WTC11 (cell line): ENCODE measurements at regions of chr22 and their contacts with region 1.

Region 1: DNA sequence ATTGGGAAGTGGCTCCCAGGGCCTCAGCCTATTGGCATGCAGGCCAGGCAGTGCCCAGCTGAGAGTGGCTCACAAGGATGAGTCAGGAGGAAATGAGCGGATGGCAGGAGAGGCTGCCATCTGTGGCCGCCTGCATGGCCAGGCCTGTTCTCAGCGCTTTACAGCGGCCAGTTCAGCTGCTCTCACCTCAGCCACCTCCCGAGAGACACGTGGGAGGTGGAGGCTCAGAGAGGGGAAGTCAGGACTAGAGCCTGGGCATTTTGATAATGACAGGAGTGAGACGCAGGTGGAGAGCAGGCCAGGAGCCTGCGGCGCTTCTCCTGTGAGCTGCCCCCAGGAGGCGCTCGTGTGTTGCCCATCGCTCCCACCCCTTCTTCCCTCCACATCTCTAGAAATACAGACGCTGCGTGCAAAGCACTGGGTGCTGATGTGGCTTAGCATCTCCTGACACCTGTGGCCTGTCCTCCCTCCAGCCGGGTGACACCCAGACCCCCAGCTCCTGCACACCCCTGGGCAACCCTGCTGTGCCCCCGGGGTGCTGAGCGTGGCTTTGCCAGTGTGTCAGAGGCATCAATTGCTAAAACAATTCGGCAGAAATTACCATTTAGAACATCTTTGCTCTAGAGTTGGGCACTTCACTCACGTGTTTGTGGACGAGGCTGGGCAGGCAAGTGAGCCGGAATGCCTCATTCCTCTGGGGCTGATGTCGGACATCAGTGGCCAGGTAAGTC is 21.4 kb upstream of the PANX2 start:
- DNase-seq: peak; percentile 74
- ATAC-seq: peak; percentile 89
- H3K4me3 Mint-ChIP-seq: no peak overlapping the region
- H3K27ac Mint-ChIP-seq: no peak overlapping the region
- H3K4me1 Mint-ChIP-seq: 0 out of 2 replicates have a peak, but pooled peaks cover 2% of the 10 kb centered on the region
- H3K27me3 Mint-ChIP-seq: no peaks in the 10 kb centered on the region
- CTCF ChIP-seq: peak; percentile 88

Region 2: DNA sequence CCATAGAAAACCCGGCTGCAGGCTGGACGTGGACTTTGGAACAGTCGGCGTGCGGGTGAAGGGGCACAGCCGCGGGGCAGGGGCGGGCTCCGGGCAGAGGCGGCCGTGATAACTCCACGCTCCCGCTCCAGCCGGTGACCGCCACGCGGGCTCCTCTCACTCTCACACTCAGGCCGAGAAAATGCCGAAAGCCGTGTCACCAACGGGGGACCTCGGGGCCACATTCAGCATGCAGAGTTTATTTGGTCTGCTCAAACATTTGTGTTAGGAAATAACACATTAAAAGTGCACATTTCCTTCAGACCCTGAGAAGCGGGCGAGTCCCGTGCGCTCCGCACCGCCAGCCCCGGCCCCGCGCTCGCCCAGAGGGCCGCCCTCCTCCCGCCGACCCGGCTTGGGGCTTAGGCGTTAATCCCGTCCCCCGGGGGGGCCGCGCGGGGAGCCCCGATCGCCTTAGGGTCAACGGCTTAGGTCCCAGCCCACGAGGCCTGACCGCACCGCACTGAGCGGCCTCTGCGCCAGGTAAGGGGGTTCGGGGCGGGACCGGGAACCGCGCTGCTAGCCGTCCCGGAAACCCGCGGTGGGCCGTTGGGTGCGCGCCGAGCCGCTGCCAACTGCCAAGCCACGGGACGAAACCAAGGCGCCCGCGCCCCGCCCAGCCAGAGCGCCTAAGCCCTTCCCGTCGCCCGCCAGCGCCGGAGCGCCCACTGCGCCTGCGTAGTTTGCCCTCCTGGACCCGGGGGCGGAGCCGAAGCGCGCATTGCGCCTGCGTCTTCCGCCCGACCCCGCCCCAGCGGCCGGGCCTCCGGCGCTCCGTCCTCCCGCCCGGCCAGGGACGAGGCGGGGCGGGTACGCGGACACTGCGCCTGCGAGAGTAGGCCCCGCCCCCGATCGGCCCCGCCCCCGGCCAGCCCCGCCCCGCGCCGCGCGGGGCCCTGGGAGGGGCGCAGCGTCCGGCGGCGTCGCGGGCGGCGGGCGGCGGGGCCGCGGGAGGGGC is 296.0 kb before region 1 on chr22 and contains the start of gene ZBED4:
- CTCF ChIA-PET with region 1: no interaction called
- POLR2A ChIA-PET with region 1: no interaction called
- DNase-seq: peak; percentile 98
- ATAC-seq: peak; percentile 86
- H3K4me3 Mint-ChIP-seq: peak within 1 kb of the TSS; percentile 93
- H3K27ac Mint-ChIP-seq: peak within 1 kb of the TSS; percentile 75
- H3K4me1 Mint-ChIP-seq: peaks cover 21% of the 10 kb centered on the region
- H3K27me3 Mint-ChIP-seq: peaks cover 44% of the 10 kb centered on the region
- CTCF ChIP-seq: no peak
- total RNA-seq, gene ZBED4: 24.7 to 29.2 TPM (median 24.8 TPM) in 3 replicates

Region 3: GRCh38 chr22:50190182-50190940 is 41.2 kb after region 1 on chr22:
- CTCF ChIA-PET with region 1: interaction called, 14 read pairs
- POLR2A ChIA-PET with region 1: no interaction called
- DNase-seq: peak; percentile 68
- ATAC-seq: peak; percentile 64
- H3K4me3 Mint-ChIP-seq: peak overlapping the region; percentile 55
- H3K27ac Mint-ChIP-seq: no peak overlapping the region
- H3K4me1 Mint-ChIP-seq: peaks cover 16% of the 10 kb centered on the region
- H3K27me3 Mint-ChIP-seq: no peaks in the 10 kb centered on the region; the same call in 1 of the 2 replicates
- CTCF ChIP-seq: no peak

Region 4: DNA sequence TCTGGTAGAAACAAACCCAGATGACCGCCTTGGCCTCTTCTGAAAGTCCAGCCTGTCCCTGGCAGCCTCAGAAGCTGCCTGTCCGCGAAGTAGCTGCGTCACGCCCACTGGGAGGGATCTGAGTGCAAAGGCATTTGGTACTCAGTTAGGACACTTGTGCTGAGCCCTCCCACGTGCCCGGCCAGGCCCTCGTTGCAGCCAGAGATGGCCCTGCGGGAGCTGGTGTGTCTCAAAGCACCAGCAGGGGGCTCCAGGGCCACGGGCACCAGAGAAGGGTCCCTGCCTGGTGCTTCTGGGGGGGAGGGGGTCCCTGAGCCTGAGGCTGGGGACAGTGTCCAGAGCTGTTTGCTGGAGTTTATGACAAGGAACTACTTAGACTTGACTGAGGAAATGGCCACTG is 57.4 kb after region 1 on chr22:
- CTCF ChIA-PET with region 1: interaction called, 19 read pairs
- POLR2A ChIA-PET with region 1: no interaction called
- DNase-seq: peak; percentile 78
- ATAC-seq: peak; percentile 84
- H3K4me3 Mint-ChIP-seq: no peak overlapping the region
- H3K27ac Mint-ChIP-seq: no peak overlapping the region
- H3K4me1 Mint-ChIP-seq: peaks cover 8% of the 10 kb centered on the region
- H3K27me3 Mint-ChIP-seq: no peaks in the 10 kb centered on the region
- CTCF ChIP-seq: peak; percentile 23; the same call in 1 of the 2 replicates